ENCODE measurements at regions of chr2 and their contacts with region 1.

Region 1: GRCh38 chr2:99559075-99559662 is 69.4 kb upstream of the REV1 start:
- DNase-seq: peak; percentile 88 to 91
- H3K4me3 ChIP-seq: no peak overlapping the region
- H3K27ac ChIP-seq: no peak overlapping the region
- H3K4me1 ChIP-seq: no peaks in the 10 kb centered on the region
- H3K27me3 ChIP-seq: no peaks in the 10 kb centered on the region
- CTCF ChIP-seq: peak; percentile 95 to 100 (median 97)
- POLR2A ChIP-seq: no peak

Region 2: GRCh38 chr2:100242891-100243619 is 683.9 kb after region 1 on chr2:
- intact Hi-C with region 1: loop called (anchors 10 kb)
- DNase-seq: peak; percentile 46 to 60
- H3K4me3 ChIP-seq: no peak overlapping the region
- H3K27ac ChIP-seq: no peak overlapping the region
- H3K4me1 ChIP-seq: no peaks in the 10 kb centered on the region
- H3K27me3 ChIP-seq: no peaks in the 10 kb centered on the region
- CTCF ChIP-seq: peak; percentile 31 to 74 (median 56)
- POLR2A ChIP-seq: no peak

Measured in uterus (tissue), 4 donors.